Astrocyte of the cerebellum (primary cell): ENCODE measurements at regions of chr14 and their contacts with region 1.

Region 1: DNA sequence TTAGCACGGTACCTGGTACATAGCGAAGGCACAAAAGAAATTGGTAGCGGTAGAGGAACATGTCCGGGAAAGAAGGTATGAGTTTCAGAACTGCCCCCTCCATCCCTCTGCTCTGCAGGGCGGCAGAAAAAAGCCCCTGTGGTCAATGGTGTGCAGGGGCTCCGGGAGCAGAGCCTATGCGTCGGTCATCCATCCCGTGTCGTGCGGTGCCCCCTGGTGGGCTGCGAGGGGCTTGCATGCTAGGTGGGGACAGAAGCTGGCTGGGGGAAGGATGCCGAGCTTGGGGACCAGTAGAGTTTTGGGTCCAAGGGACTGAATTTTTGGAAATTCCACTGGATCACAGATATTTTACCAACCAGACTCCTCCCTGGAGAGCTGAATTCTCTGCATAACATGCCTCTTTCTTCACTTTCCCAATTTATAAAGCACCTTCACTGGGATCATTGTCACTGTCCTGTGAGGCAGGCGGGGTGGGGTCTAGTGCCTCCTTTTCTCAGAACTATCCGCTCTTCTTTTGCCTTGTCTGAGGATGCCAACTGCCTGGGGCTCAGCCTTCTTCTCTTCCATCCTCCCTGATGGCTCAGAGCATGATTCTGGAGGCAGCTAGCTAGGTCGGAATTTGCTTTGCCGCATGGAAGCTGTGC is 148.7 kb downstream of the SMOC1 start:
- DNase-seq: no peak
- H3K4me3 ChIP-seq: no peak overlapping the region
- CTCF ChIP-seq: peak; percentile 93

Region 2: DNA sequence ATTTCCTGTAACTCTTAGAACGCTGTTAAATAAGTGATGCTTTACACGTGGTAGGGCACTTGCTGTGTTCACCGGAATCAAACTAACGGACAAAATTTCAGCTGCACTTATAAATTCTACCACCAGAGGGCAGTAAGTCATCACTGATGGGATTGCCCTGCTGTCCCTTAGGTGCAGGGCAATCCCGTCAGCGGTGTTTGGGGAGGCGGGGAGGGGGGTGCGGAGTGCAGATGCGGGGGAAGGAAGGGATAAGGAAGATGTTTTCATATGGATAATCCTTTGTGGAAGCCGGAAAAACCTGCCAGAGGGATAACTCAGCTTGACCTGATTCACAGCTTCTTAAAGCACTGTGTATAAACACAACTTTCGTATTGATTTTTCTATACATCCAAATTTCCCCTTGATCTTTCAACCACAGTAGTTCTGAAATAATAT is 209.1 kb before region 1 on chr14:
- in situ Hi-C with region 1: loop called (anchors 25 kb)
- DNase-seq: peak; percentile 46
- H3K4me3 ChIP-seq: no peak overlapping the region
- CTCF ChIP-seq: peak; percentile 79